Naive thymus-derived CD4-positive, alpha-beta T cell (primary cell): ENCODE measurements at regions of chr17 and their contacts with region 1.

Region 1: GRCh38 chr17:5281814-5282653 is at the start of gene RABEP1:
- DNase-seq: peak; percentile 88 to 98 (median 92)
- ATAC-seq: peak; percentile 94
- H3K4me3 ChIP-seq: peak within 1 kb of the TSS; percentile 54
- H3K4me3 Mint-ChIP-seq: peak within 1 kb of the TSS; percentile 72 to 95 (median 88)
- H3K27ac ChIP-seq: peak within 1 kb of the TSS; percentile 86
- H3K27ac Mint-ChIP-seq: peak within 1 kb of the TSS; percentile 64 to 93 (median 88)
- H3K4me1 ChIP-seq: peaks cover 16 to 25% of the 10 kb centered on the region in 2 donors
- H3K4me1 Mint-ChIP-seq: peaks cover 24 to 47% (median 37%) of the 10 kb centered on the region in 7 donors
- H3K27me3 ChIP-seq: no peaks in the 10 kb centered on the region
- H3K27me3 Mint-ChIP-seq: no peaks in the 10 kb centered on the region
- total RNA-seq, gene RABEP1: 37.3 to 58.5 (median 44.6) TPM

Region 2: GRCh38 chr17:5237541-5238016 is 44.5 kb before region 1 on chr17:
- CTCF ChIA-PET with region 1: no interaction called
- POLR2A ChIA-PET with region 1: interaction called, 5 read pairs
- intact Hi-C with region 1: loop called in 1 of 2 experiments (anchors 1 kb)
- DNase-seq: peak in 2 of 9 donors; percentile 8 to 28
- ATAC-seq: peak; percentile 55
- H3K4me3 ChIP-seq: no peak overlapping the region
- H3K4me3 Mint-ChIP-seq: peak overlapping the region in 3 of 10 donors; percentile 8 to 32 (median 28)
- H3K27ac ChIP-seq: no peak overlapping the region
- H3K27ac Mint-ChIP-seq: peak overlapping the region in 6 of 9 donors; percentile 42 to 78 (median 60)
- H3K4me1 ChIP-seq: peaks cover 22 to 40% of the 10 kb centered on the region in 2 donors
- H3K4me1 Mint-ChIP-seq: peaks cover 11 to 44% (median 36%) of the 10 kb centered on the region in 7 donors
- H3K27me3 ChIP-seq: no peaks in the 10 kb centered on the region
- H3K27me3 Mint-ChIP-seq: peaks cover 0 to 2% (median 0%) of the 10 kb centered on the region in 5 donors

Region 3: GRCh38 chr17:5299383-5299782 is 17.3 kb after region 1 on chr17:
- CTCF ChIA-PET with region 1: no interaction called
- POLR2A ChIA-PET with region 1: interaction called, 5 read pairs
- intact Hi-C with region 1: loop called in 1 of 2 experiments (anchors 2 kb)
- DNase-seq: no peak
- ATAC-seq: no peak
- H3K4me3 ChIP-seq: no peak overlapping the region
- H3K4me3 Mint-ChIP-seq: no peak overlapping the region
- H3K27ac ChIP-seq: no peak overlapping the region
- H3K27ac Mint-ChIP-seq: peak overlapping the region in 2 of 9 donors; percentile 19 to 31
- H3K4me1 ChIP-seq: peaks cover 0 to 8% of the 10 kb centered on the region in 2 donors
- H3K4me1 Mint-ChIP-seq: peaks cover 9 to 66% (median 58%) of the 10 kb centered on the region in 7 donors
- H3K27me3 ChIP-seq: no peaks in the 10 kb centered on the region
- H3K27me3 Mint-ChIP-seq: no peaks in the 10 kb centered on the region

Region 4: GRCh38 chr17:5329784-5330557 is 47.9 kb after region 1 on chr17:
- CTCF ChIA-PET with region 1: no interaction called
- POLR2A ChIA-PET with region 1: no interaction called
- intact Hi-C with region 1: loop called in 1 of 2 experiments (anchors 2 kb)
- DNase-seq: peak in 3 of 9 donors; percentile 9 to 22 (median 10)
- ATAC-seq: peak; percentile 47
- H3K4me3 ChIP-seq: no peak overlapping the region
- H3K4me3 Mint-ChIP-seq: peak overlapping the region in 7 of 10 donors; percentile 1 to 45 (median 24)
- H3K27ac ChIP-seq: no peak overlapping the region
- H3K27ac Mint-ChIP-seq: peak overlapping the region in 8 of 9 donors; percentile 53 to 85 (median 70)
- H3K4me1 ChIP-seq: peaks cover 4 to 8% of the 10 kb centered on the region in 2 donors
- H3K4me1 Mint-ChIP-seq: peaks cover 16 to 43% (median 36%) of the 10 kb centered on the region in 7 donors
- H3K27me3 ChIP-seq: no peaks in the 10 kb centered on the region
- H3K27me3 Mint-ChIP-seq: no peaks in the 10 kb centered on the region

Region 5: DNA sequence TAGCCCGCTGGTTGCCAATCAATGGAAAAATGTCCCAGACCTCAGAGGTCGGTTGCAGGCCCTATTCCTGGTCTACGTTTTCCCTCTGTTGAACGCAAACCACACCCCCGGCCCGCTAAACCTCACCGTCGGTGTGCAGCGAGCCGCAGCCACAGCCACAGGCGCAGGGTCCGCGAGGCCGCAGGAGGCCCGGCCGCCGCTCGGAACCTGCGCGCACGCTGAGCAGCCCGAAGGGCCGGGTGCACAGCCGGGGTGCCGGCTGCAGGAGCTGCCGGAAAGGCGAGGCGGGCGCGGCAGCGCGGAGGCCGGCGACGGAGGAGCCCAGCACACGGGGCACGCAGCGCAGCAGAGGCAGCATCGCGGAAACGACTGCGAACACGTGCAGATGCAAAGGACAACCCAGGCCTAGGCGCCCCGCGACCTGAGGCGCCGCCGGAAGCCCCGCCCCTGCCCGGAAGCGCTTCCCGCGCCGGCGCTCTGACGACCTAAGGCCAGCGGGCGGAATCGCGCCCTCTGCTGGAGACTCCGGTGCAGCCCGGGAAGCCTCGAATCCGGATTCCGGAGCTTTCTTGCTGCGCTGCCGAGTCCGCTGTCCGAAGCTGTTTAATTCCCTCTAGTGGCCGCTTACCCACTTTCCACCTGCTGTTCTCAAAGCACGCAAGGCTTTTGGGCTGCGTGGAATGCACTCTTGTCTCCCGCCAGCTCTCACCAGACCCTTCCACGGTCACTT is 156.8 kb after region 1 on chr17 and contains the start of gene C1QBP:
- CTCF ChIA-PET with region 1: no interaction called
- POLR2A ChIA-PET with region 1: no interaction called
- intact Hi-C with region 1: loop called (anchors 1 kb)
- DNase-seq: peak; percentile 85 to 96 (median 91)
- ATAC-seq: peak; percentile 98
- H3K4me3 ChIP-seq: peak within 1 kb of the TSS; percentile 80
- H3K4me3 Mint-ChIP-seq: peak within 1 kb of the TSS; percentile 80 to 95 (median 90)
- H3K27ac ChIP-seq: peak within 1 kb of the TSS; percentile 89
- H3K27ac Mint-ChIP-seq: peak within 1 kb of the TSS; percentile 90 to 98 (median 94)
- H3K4me1 ChIP-seq: peaks cover 19 to 28% of the 10 kb centered on the region in 2 donors
- H3K4me1 Mint-ChIP-seq: peaks cover 16 to 43% (median 37%) of the 10 kb centered on the region in 7 donors
- H3K27me3 ChIP-seq: no peaks in the 10 kb centered on the region
- H3K27me3 Mint-ChIP-seq: no peaks in the 10 kb centered on the region
- total RNA-seq, gene C1QBP: 58.0 to 162 (median 82.3) TPM